ENCODE measurements at regions of chr3 and their contacts with region 1.

Region 1: GRCh38 chr3:134473868-134474546 is 11.8 kb downstream of the ANAPC13 start:
- DNase-seq: peak; percentile 91
- H3K4me3 ChIP-seq: no peak overlapping the region
- H3K27ac ChIP-seq: no peak overlapping the region
- H3K4me1 ChIP-seq: no peaks in the 10 kb centered on the region
- H3K27me3 ChIP-seq: no peaks in the 10 kb centered on the region
- CTCF ChIP-seq: peak; percentile 83 to 91 (median 87)
- POLR2A ChIP-seq: no peak

Region 2: GRCh38 chr3:134212906-134213665 is 260.9 kb before region 1 on chr3:
- intact Hi-C with region 1: loop called (anchors 10 kb)
- DNase-seq: peak; percentile 89
- H3K4me3 ChIP-seq: no peak overlapping the region
- H3K27ac ChIP-seq: no peak overlapping the region
- H3K4me1 ChIP-seq: no peaks in the 10 kb centered on the region
- H3K27me3 ChIP-seq: no peaks in the 10 kb centered on the region
- CTCF ChIP-seq: peak; percentile 91 to 99 (median 94)
- POLR2A ChIP-seq: no peak

Region 3: GRCh38 chr3:134791992-134792391 is 318.0 kb after region 1 on chr3:
- intact Hi-C with region 1: no loop called
- DNase-seq: no peak
- H3K4me3 ChIP-seq: no peak overlapping the region
- H3K27ac ChIP-seq: no peak overlapping the region
- H3K4me1 ChIP-seq: peaks cover 5% of the 10 kb centered on the region
- H3K27me3 ChIP-seq: no peaks in the 10 kb centered on the region
- CTCF ChIP-seq: no peak
- POLR2A ChIP-seq: no peak